Breast epithelium (tissue), 4 donors: ENCODE measurements at regions of chr4 and their contacts with region 1.

Region 1: GRCh38 chr4:163404580-163404979 is 60.9 kb downstream of the NPY5R start:
- DNase-seq: no peak
- H3K4me3 ChIP-seq: peak overlapping the region in 2 of 3 donors; percentile 2 to 8
- H3K27ac ChIP-seq: peak overlapping the region in 1 of 2 donors; percentile 19
- H3K4me1 ChIP-seq: no peaks in the 10 kb centered on the region
- H3K27me3 ChIP-seq: no peaks in the 10 kb centered on the region
- CTCF ChIP-seq: no peak
- POLR2A ChIP-seq: no peak

Region 2: GRCh38 chr4:162909952-162910351 is 494.6 kb before region 1 on chr4:
- intact Hi-C with region 1: loop called (anchors 10 kb)
- DNase-seq: no peak
- H3K4me3 ChIP-seq: no peak overlapping the region
- H3K27ac ChIP-seq: no peak overlapping the region
- H3K4me1 ChIP-seq: no peaks in the 10 kb centered on the region
- H3K27me3 ChIP-seq: no peaks in the 10 kb centered on the region
- CTCF ChIP-seq: no peak
- POLR2A ChIP-seq: no peak

Region 3: GRCh38 chr4:163200727-163201349 is 203.7 kb before region 1 on chr4:
- intact Hi-C with region 1: no loop called
- DNase-seq: no peak
- H3K4me3 ChIP-seq: no peak overlapping the region
- H3K27ac ChIP-seq: no peak overlapping the region
- H3K4me1 ChIP-seq: no peaks in the 10 kb centered on the region
- H3K27me3 ChIP-seq: no peaks in the 10 kb centered on the region
- CTCF ChIP-seq: no peak
- POLR2A ChIP-seq: no peak

Region 4: DNA sequence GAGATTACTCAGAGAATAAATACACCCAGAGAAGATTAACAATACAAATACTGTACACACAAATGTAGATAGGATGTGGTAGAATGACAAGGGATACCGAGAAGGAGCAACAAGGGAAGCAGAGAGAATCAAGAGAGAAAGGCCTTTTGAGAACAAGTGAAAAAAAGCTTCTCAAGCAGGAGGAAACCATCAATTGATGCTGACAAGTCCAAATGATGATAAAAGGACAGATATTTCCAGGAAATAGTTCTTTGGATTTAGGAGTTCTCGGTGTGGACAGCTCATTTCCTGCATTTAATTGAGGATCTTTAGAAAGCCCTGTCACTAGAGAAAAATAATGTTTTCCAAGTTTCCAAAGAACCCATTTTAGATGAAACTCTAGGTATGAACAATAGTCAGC is 12.8 kb before region 1 on chr4:
- intact Hi-C with region 1: no loop called
- DNase-seq: no peak
- H3K4me3 ChIP-seq: no peak overlapping the region
- H3K27ac ChIP-seq: no peak overlapping the region
- H3K4me1 ChIP-seq: no peaks in the 10 kb centered on the region
- H3K27me3 ChIP-seq: no peaks in the 10 kb centered on the region
- CTCF ChIP-seq: no peak
- POLR2A ChIP-seq: no peak

Region 5: GRCh38 chr4:163611784-163612445 is 207.3 kb after region 1 on chr4:
- intact Hi-C with region 1: no loop called
- DNase-seq: no peak
- H3K4me3 ChIP-seq: peak overlapping the region in 2 of 3 donors; percentile 3 to 31
- H3K27ac ChIP-seq: no peak overlapping the region
- H3K4me1 ChIP-seq: no peaks in the 10 kb centered on the region
- H3K27me3 ChIP-seq: no peaks in the 10 kb centered on the region
- CTCF ChIP-seq: no peak
- POLR2A ChIP-seq: no peak